ENCODE measurements at regions of chr14 and their contacts with region 1.

Region 1: DNA sequence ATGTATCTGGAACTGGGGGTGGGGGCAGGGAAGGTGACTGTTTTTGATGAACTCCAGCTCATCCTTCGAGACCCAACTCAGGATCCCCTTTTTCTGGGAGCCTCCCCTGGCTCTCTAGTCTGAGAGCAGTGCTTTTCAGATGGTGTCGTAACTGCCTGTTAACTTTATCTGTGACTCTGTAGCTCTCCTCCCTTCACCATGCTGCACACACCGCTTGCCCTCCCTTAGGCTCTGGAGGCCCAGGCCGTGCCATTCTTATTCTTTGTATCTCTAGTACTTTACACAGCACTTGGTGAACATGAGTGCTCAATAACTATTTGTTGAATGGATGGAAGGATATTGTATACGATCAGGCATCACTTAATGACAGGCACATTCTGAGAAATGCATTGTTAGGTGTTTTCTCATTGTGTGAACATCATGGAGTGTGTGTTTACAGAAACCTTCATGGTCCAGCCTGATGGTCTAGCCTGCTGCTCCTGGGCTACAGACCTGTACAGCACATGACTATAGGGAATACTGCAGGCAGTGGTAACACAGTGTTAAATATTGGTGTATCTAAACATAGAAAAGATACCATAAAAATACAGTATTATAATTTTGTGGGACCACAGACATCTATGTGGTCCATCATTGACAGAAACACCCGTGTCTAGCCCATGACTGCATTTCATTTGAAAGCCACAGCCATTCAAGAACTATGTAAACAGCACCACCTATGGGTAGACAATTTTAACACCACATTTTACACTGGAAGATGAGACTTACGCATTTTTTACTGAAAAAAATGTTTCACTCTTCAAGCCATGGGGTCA is 91.8 kb downstream of the EML1 start:
- DNase-seq: peak in 3 of 4 donors; percentile 23 to 32 (median 25)
- ATAC-seq: peak; percentile 76
- H3K4me3 ChIP-seq: no peak overlapping the region
- H3K27ac ChIP-seq: no peak overlapping the region
- H3K4me1 ChIP-seq: peaks cover 9% of the 10 kb centered on the region
- H3K27me3 ChIP-seq: no peaks in the 10 kb centered on the region
- CTCF ChIP-seq: peak; percentile 54 to 90 (median 79)
- POLR2A ChIP-seq: no peak

Region 2: GRCh38 chr14:99683619-99684355 is 201.3 kb before region 1 on chr14 and contains the start of gene CYP46A1:
- intact Hi-C with region 1: loop called (anchors 5 kb)
- DNase-seq: peak; percentile 100
- ATAC-seq: peak; percentile 94
- H3K4me3 ChIP-seq: peak within 1 kb of the TSS; percentile 50 to 78
- H3K27ac ChIP-seq: peak within 1 kb of the TSS in 3 of 4 donors; percentile 41 to 86 (median 77)
- H3K4me1 ChIP-seq: peaks cover 14% of the 10 kb centered on the region
- H3K27me3 ChIP-seq: no peaks in the 10 kb centered on the region
- CTCF ChIP-seq: peak in 1 of 7 experiments; percentile 22
- POLR2A ChIP-seq: peak in 1 of 3 donors; percentile 32
- total RNA-seq, gene CYP46A1: 1.3 to 4.9 TPM

Region 3: GRCh38 chr14:99729991-99730868 is 154.8 kb before region 1 on chr14:
- intact Hi-C with region 1: loop called (anchors 5 kb)
- DNase-seq: peak; percentile 71 to 85 (median 79)
- ATAC-seq: peak; percentile 76
- H3K4me3 ChIP-seq: no peak overlapping the region
- H3K27ac ChIP-seq: no peak overlapping the region
- H3K4me1 ChIP-seq: peaks cover 43% of the 10 kb centered on the region
- H3K27me3 ChIP-seq: no peaks in the 10 kb centered on the region
- CTCF ChIP-seq: peak; percentile 59 to 94 (median 86)
- POLR2A ChIP-seq: no peak